ENCODE measurements at regions of chr9 and their contacts with region 1.

Region 1: GRCh38 chr9:75265525-75265972 is 177.2 kb downstream of the OSTF1 start:
- DNase-seq: peak; percentile 23 to 38 (median 32)
- ATAC-seq: peak; percentile 82
- H3K4me3 ChIP-seq: no peak overlapping the region
- H3K27ac ChIP-seq: no peak overlapping the region
- H3K4me1 ChIP-seq: no peaks in the 10 kb centered on the region
- H3K27me3 ChIP-seq: no peaks in the 10 kb centered on the region
- CTCF ChIP-seq: peak; percentile 54 to 69 (median 63)
- EP300 ChIP-seq: no peak
- POLR2A ChIP-seq: no peak
- RAD21 ChIP-seq: peak; percentile 37 to 67

Region 2: DNA sequence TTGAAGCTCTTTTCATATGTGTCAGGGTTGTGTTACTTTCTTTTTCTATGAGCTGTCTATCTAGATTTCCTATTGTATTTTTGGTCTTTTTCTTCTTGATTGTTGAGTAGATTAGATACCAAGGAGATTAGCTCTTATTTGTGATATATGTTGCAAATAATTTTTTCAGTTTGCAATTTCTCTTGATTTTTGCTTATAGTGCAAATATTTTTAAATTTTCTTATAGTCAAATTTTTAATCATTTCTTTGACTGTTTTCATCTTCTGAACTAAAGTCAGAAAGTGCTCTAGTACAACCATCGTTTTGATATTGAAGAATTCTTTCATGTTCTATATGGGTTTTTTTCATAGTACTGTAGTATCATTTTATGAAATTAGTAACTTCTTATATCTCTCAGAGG is 16.5 kb after region 1 on chr9:
- CTCF ChIA-PET with region 1: no interaction called
- POLR2A ChIA-PET with region 1: no interaction called
- in situ Hi-C with region 1: no loop called
- intact Hi-C with region 1: no loop called
- DNase-seq: no peak
- ATAC-seq: no peak
- H3K4me3 ChIP-seq: no peak overlapping the region
- H3K27ac ChIP-seq: no peak overlapping the region
- H3K4me1 ChIP-seq: no peaks in the 10 kb centered on the region
- H3K27me3 ChIP-seq: no peaks in the 10 kb centered on the region
- CTCF ChIP-seq: no peak
- EP300 ChIP-seq: no peak
- POLR2A ChIP-seq: no peak
- RAD21 ChIP-seq: no peak

Region 3: DNA sequence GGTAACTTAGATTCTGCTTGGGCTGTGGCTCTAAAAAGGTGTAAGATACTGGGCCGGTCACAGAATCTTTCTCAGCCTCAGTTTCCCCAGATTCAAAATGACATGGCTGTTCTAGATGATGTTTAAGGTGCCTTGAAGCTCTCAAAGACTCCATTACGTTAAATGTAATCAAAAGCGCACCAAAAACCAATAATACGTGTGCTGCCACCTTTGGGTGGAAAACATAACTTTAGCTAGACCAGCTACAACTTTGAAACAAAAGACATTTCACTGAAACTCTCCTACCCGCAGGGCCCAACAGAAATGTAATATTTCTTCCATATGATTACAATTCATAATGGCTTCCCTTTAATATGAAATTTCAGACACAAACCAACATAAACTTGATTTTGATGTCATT is 590.0 kb after region 1 on chr9:
- CTCF ChIA-PET with region 1: no interaction called
- POLR2A ChIA-PET with region 1: no interaction called
- in situ Hi-C with region 1: no loop called
- intact Hi-C with region 1: loop called (anchors 1 kb)
- DNase-seq: peak in 1 of 4 experiments; percentile 1
- ATAC-seq: no peak
- H3K4me3 ChIP-seq: no peak overlapping the region
- H3K27ac ChIP-seq: no peak overlapping the region
- H3K4me1 ChIP-seq: no peaks in the 10 kb centered on the region; a peak in 1 of 5 replicates
- H3K27me3 ChIP-seq: no peaks in the 10 kb centered on the region
- CTCF ChIP-seq: peak; percentile 2 to 38 (median 22); a peak in 3 of 6 replicates
- EP300 ChIP-seq: no peak
- POLR2A ChIP-seq: no peak
- RAD21 ChIP-seq: no peak

Region 4: GRCh38 chr9:76302947-76303940 is 1037.7 kb after region 1 on chr9:
- CTCF ChIA-PET with region 1: interaction called, 5 read pairs
- POLR2A ChIA-PET with region 1: no interaction called
- in situ Hi-C with region 1: no loop called
- intact Hi-C with region 1: loop called (anchors 2 kb)
- DNase-seq: peak; percentile 34 to 42 (median 40)
- ATAC-seq: peak; percentile 67
- H3K4me3 ChIP-seq: no peak overlapping the region
- H3K27ac ChIP-seq: no peak overlapping the region
- H3K4me1 ChIP-seq: no peaks in the 10 kb centered on the region
- H3K27me3 ChIP-seq: peaks cover 0 to 5% of the 10 kb centered on the region in 2 experiments; a peak in 2 of 5 replicates
- CTCF ChIP-seq: peak; percentile 29 to 70 (median 34); a peak in 4 of 6 replicates
- EP300 ChIP-seq: no peak
- POLR2A ChIP-seq: no peak
- RAD21 ChIP-seq: peak; percentile 64 to 73